Naive thymus-derived CD8-positive, alpha-beta T cell (primary cell): ENCODE measurements at regions of chr7 and their contacts with region 1.

Region 1: GRCh38 chr7:36456138-36456537 is 66.5 kb downstream of the ANLN start:
- DNase-seq: no peak
- ATAC-seq: no peak
- H3K4me3 Mint-ChIP-seq: no peak overlapping the region
- H3K27ac Mint-ChIP-seq: no peak overlapping the region
- H3K4me1 Mint-ChIP-seq: no peaks in the 10 kb centered on the region
- H3K27me3 Mint-ChIP-seq: no peaks in the 10 kb centered on the region

Region 2: GRCh38 chr7:36389371-36390198 is 66.6 kb before region 1 on chr7 and contains the start of gene ANLN:
- POLR2A ChIA-PET with region 1: no interaction called
- DNase-seq: peak; percentile 70 to 87 (median 80)
- ATAC-seq: peak; percentile 87 to 90
- H3K4me3 Mint-ChIP-seq: peak within 1 kb of the TSS; percentile 75 to 88 (median 84)
- H3K27ac Mint-ChIP-seq: peak within 1 kb of the TSS; percentile 67 to 93 (median 82)
- H3K4me1 Mint-ChIP-seq: peaks cover 10 to 28% (median 20%) of the 10 kb centered on the region in 4 donors
- H3K27me3 Mint-ChIP-seq: peaks cover 0 to 15% (median 3%) of the 10 kb centered on the region in 5 donors
- polyA plus RNA-seq, gene ANLN: not detected

Region 3: GRCh38 chr7:36440880-36441279 is 15.3 kb before region 1 on chr7:
- POLR2A ChIA-PET with region 1: interaction called, 11 read pairs
- DNase-seq: peak in 2 of 10 donors; percentile 11 to 16
- ATAC-seq: no peak
- H3K4me3 Mint-ChIP-seq: no peak overlapping the region
- H3K27ac Mint-ChIP-seq: no peak overlapping the region
- H3K4me1 Mint-ChIP-seq: no peaks in the 10 kb centered on the region
- H3K27me3 Mint-ChIP-seq: no peaks in the 10 kb centered on the region

Region 4: GRCh38 chr7:36708767-36709166 is 252.6 kb after region 1 on chr7:
- POLR2A ChIA-PET with region 1: no interaction called
- DNase-seq: no peak
- ATAC-seq: no peak
- H3K4me3 Mint-ChIP-seq: peak overlapping the region in 2 of 10 donors; percentile 41 to 63
- H3K27ac Mint-ChIP-seq: peak overlapping the region in 6 of 10 donors; percentile 5 to 87 (median 30)
- H3K4me1 Mint-ChIP-seq: peaks cover 28 to 66% (median 44%) of the 10 kb centered on the region in 4 donors
- H3K27me3 Mint-ChIP-seq: no peaks in the 10 kb centered on the region